Right cardiac atrium (tissue), 5 donors: ENCODE measurements at regions of chr5 and their contacts with region 1.

Region 1: GRCh38 chr5:100903039-100903887 is at the start of gene ST8SIA4:
- DNase-seq: peak; percentile 79 to 93 (median 93)
- ATAC-seq: peak; percentile 90 to 91
- H3K4me3 ChIP-seq: peak within 1 kb of the TSS; percentile 63
- H3K27ac ChIP-seq: peak within 1 kb of the TSS; percentile 62
- H3K4me1 ChIP-seq: no peaks in the 10 kb centered on the region
- H3K27me3 ChIP-seq: no peaks in the 10 kb centered on the region
- total RNA-seq, gene ST8SIA4: 3.6 to 5.9 (median 4.3) TPM

Region 2: DNA sequence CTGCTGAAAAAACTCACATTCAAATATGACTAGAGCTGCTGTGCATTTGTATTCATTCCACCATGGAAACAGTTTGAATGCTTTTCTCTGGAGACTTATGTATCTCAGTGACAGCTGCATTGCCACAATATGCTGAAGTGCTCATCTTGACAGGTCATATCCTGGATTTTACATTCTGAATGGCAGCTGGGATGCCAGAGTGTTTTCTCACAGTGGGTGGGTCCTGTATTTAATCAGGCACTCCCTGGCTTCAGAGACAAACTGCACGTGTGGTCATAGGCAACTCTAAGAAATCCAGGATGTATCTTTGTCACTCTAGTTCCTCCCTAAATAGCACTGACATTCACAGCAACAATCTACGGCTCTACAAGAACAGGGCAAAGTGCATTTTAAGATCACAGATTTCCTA is 75.8 kb before region 1 on chr5:
- intact Hi-C with region 1: loop called in 1 of 4 experiments (anchors 10 kb)
- DNase-seq: peak in 1 of 3 donors; percentile 16
- ATAC-seq: peak in 1 of 2 donors; percentile 66
- H3K4me3 ChIP-seq: no peak overlapping the region
- H3K27ac ChIP-seq: peak overlapping the region; percentile 17
- H3K4me1 ChIP-seq: peaks cover 1% of the 10 kb centered on the region
- H3K27me3 ChIP-seq: no peaks in the 10 kb centered on the region

Region 3: DNA sequence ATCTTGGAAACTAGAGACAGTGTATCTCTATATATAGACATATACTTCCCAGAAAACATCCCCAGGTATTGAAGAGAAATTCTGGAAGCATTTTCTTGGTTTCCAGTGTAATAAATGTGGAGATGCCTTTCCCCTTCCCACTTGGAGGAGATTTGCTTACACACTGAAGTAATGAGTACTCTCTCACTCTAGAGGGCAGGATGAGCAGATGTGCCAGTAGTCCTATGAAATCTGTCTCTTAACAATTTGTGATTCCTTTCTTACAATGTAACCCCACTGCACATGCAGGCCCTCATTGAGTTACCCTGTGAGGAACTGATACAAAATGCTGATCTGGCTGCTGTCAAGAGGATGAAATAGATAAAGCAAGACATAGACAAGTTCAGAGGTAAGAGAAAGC is 825.7 kb after region 1 on chr5:
- intact Hi-C with region 1: no loop called
- DNase-seq: no peak
- ATAC-seq: no peak
- H3K4me3 ChIP-seq: no peak overlapping the region
- H3K27ac ChIP-seq: no peak overlapping the region
- H3K4me1 ChIP-seq: no peaks in the 10 kb centered on the region
- H3K27me3 ChIP-seq: no peaks in the 10 kb centered on the region